B cell (primary cell): ENCODE measurements at regions of chr10 and their contacts with region 1.

Region 1: DNA sequence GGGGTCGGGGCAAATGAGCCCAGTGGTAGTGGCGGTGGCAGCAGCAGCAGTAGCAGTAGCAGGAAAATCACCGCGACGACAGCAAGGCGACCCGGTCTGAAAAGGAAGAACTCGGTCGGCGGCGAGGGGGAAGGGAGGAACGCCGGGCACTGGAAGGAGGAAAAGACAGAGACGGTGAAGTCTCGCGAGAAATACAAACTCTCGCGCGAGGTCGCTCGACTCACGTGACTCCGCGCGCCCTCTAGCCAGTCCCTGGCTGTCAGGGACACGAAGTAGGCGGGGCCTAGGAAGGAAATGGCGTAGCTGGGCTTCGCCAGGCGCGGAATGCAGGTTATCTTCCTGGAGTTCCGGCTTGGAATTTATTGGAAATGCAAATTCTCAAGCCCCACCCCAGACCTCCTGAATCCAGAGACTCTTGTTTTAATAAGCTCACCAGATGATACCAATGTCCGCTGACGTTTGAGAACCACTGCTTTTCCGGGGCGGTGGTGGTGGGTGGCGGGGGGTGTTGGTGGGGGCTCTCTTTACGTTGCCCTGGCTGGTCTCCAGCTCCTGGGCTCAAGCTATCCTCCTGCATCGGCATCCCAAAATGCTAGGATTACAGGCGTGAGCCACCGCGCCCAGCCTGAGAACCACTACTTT is at the start of gene SMNDC1:
- DNase-seq: peak; percentile 98
- ATAC-seq: peak; percentile 93
- H3K4me3 ChIP-seq: peak within 1 kb of the TSS; percentile 64 to 89 (median 79)
- H3K4me3 Mint-ChIP-seq: peak within 1 kb of the TSS; percentile 98
- H3K27ac ChIP-seq: peak within 1 kb of the TSS; percentile 76 to 91
- H3K27ac Mint-ChIP-seq: peak within 1 kb of the TSS; percentile 99
- H3K4me1 ChIP-seq: peaks cover 20 to 24% of the 10 kb centered on the region in 2 donors
- H3K4me1 Mint-ChIP-seq: peaks cover 43% of the 10 kb centered on the region
- H3K27me3 ChIP-seq: no peaks in the 10 kb centered on the region
- H3K27me3 Mint-ChIP-seq: no peaks in the 10 kb centered on the region
- CTCF ChIP-seq: no peak
- total RNA-seq, gene SMNDC1: 34.4 and 36.0 TPM in 2 replicates

Region 2: GRCh38 chr10:110137142-110137545 is 167.8 kb before region 1 on chr10:
- CTCF ChIA-PET with region 1: interaction called, 4 read pairs
- POLR2A ChIA-PET with region 1: no interaction called
- intact Hi-C with region 1: loop called (anchors 1 kb)
- DNase-seq: peak; percentile 82
- ATAC-seq: peak; percentile 67
- H3K4me3 ChIP-seq: no peak overlapping the region
- H3K4me3 Mint-ChIP-seq: peak overlapping the region; percentile 18
- H3K27ac ChIP-seq: peak overlapping the region; percentile 11 to 58
- H3K27ac Mint-ChIP-seq: peak overlapping the region; percentile 47
- H3K4me1 ChIP-seq: peaks cover 20 to 26% of the 10 kb centered on the region in 2 donors
- H3K4me1 Mint-ChIP-seq: peaks cover 37% of the 10 kb centered on the region
- H3K27me3 ChIP-seq: no peaks in the 10 kb centered on the region
- H3K27me3 Mint-ChIP-seq: no peaks in the 10 kb centered on the region
- CTCF ChIP-seq: peak; percentile 85

Region 3: GRCh38 chr10:110414563-110415309 is 109.8 kb after region 1 on chr10:
- CTCF ChIA-PET with region 1: interaction called, 4 read pairs
- POLR2A ChIA-PET with region 1: no interaction called
- intact Hi-C with region 1: loop called (anchors 1 kb)
- DNase-seq: peak; percentile 92
- ATAC-seq: peak; percentile 92
- H3K4me3 ChIP-seq: peak overlapping the region in 1 of 5 experiments; percentile 11
- H3K4me3 Mint-ChIP-seq: peak overlapping the region; percentile 60
- H3K27ac ChIP-seq: no peak overlapping the region
- H3K27ac Mint-ChIP-seq: peak overlapping the region; percentile 76
- H3K4me1 ChIP-seq: peaks cover 57 to 74% of the 10 kb centered on the region in 2 donors
- H3K4me1 Mint-ChIP-seq: peaks cover 69% of the 10 kb centered on the region
- H3K27me3 ChIP-seq: peaks cover 0 to 28% (median 7%) of the 10 kb centered on the region in 4 experiments
- H3K27me3 Mint-ChIP-seq: peaks cover 13% of the 10 kb centered on the region
- CTCF ChIP-seq: no peak

Region 4: GRCh38 chr10:110547139-110547761 is 242.3 kb after region 1 on chr10:
- CTCF ChIA-PET with region 1: interaction called, 113 read pairs
- POLR2A ChIA-PET with region 1: interaction called, 5 read pairs
- intact Hi-C with region 1: loop called (anchors 1 kb)
- DNase-seq: peak; percentile 76
- ATAC-seq: peak; percentile 68
- H3K4me3 ChIP-seq: no peak overlapping the region
- H3K4me3 Mint-ChIP-seq: no peak overlapping the region
- H3K27ac ChIP-seq: no peak overlapping the region
- H3K27ac Mint-ChIP-seq: no peak overlapping the region
- H3K4me1 ChIP-seq: no peaks in the 10 kb centered on the region
- H3K4me1 Mint-ChIP-seq: peaks cover 4% of the 10 kb centered on the region
- H3K27me3 ChIP-seq: peaks cover 0 to 9% (median 4%) of the 10 kb centered on the region in 4 experiments
- H3K27me3 Mint-ChIP-seq: peaks cover 24% of the 10 kb centered on the region
- CTCF ChIP-seq: peak; percentile 85

Region 5: DNA sequence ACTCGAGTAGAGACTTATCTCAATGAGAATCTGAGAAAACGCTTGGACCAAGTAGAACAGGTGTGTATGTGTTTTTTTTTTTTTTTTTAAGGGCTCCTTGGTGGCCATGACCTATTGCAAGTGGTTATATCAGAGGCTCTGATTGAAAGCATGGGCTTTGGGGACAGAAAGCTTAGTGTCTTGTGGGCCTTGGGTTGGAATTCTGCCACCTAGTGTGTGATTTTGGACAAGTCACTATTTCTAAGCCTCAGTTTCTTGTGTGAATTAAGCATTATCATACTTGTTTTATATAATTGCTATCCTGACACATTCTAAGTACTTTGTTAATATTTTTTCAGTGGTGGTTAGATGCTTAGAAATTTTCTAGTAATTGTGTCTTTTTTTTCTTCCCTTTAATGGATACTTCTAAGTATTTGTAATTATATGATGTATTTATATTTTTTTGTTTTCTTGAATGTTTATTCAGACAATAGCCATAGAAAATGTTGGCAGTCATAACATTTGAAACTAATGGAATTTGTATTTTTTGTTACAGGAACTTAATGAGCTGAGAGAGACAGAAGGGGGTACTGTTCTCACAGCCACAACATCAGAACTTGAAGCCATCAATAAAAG is 295.7 kb after region 1 on chr10:
- CTCF ChIA-PET with region 1: interaction called, 143 read pairs
- POLR2A ChIA-PET with region 1: no interaction called
- intact Hi-C with region 1: loop called (anchors 1 kb)
- DNase-seq: peak; percentile 66
- ATAC-seq: peak; percentile 57
- H3K4me3 ChIP-seq: no peak overlapping the region
- H3K4me3 Mint-ChIP-seq: no peak overlapping the region
- H3K27ac ChIP-seq: no peak overlapping the region
- H3K27ac Mint-ChIP-seq: no peak overlapping the region
- H3K4me1 ChIP-seq: no peaks in the 10 kb centered on the region
- H3K4me1 Mint-ChIP-seq: no peaks in the 10 kb centered on the region
- H3K27me3 ChIP-seq: no peaks in the 10 kb centered on the region
- H3K27me3 Mint-ChIP-seq: no peaks in the 10 kb centered on the region
- CTCF ChIP-seq: peak; percentile 75

Region 6: DNA sequence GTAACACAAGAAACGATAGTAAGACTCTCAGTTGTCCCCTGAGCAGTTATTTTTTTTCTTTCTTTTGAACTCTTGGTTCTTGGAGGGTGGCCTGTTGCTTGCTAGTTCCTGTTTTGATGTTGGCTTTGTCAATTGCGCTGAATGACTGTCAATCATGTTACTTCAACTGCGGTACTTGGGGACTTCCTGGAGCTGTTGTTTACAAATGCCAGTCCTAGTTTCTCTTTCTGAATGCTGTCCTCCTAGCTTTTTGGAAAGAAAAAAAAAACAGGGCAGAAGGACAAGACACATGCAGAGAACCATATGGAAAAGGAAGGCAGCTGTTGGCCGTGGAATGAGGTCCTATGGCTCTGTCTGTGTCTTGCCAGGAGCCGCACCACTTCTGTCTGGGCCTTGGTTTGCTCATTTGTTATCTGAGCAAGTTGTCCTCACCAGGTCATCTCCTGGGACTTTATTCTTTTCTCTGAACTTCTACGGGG is 559.8 kb after region 1 on chr10:
- CTCF ChIA-PET with region 1: no interaction called
- POLR2A ChIA-PET with region 1: interaction called, 10 read pairs
- intact Hi-C with region 1: loop called (anchors 2 kb)
- DNase-seq: peak; percentile 89
- ATAC-seq: peak; percentile 55
- H3K4me3 ChIP-seq: peak overlapping the region in 4 of 5 experiments; percentile 21 to 60 (median 38)
- H3K4me3 Mint-ChIP-seq: peak overlapping the region; percentile 85
- H3K27ac ChIP-seq: peak overlapping the region; percentile 94 to 96
- H3K27ac Mint-ChIP-seq: peak overlapping the region; percentile 97
- H3K4me1 ChIP-seq: peaks cover 97 to 100% of the 10 kb centered on the region in 2 donors
- H3K4me1 Mint-ChIP-seq: peaks cover 97% of the 10 kb centered on the region
- H3K27me3 ChIP-seq: no peaks in the 10 kb centered on the region
- H3K27me3 Mint-ChIP-seq: no peaks in the 10 kb centered on the region
- CTCF ChIP-seq: no peak